ENCODE measurements at regions of chr17 and their contacts with region 1.

Region 1: GRCh38 chr17:4881761-4882555 is 17.4 kb upstream of the C17orf107 start:
- DNase-seq: peak; percentile 74
- H3K4me3 ChIP-seq: no peak overlapping the region
- H3K27ac ChIP-seq: no peak overlapping the region
- H3K4me1 ChIP-seq: no peaks in the 10 kb centered on the region
- H3K27me3 ChIP-seq: no peaks in the 10 kb centered on the region
- CTCF ChIP-seq: peak; percentile 92

Region 2: GRCh38 chr17:4709794-4710692 is 171.9 kb before region 1 on chr17 and contains the start of gene ARRB2:
- intact Hi-C with region 1: loop called (anchors 10 kb)
- DNase-seq: peak; percentile 96
- H3K4me3 ChIP-seq: peak within 1 kb of the TSS; percentile 66
- H3K27ac ChIP-seq: peak within 1 kb of the TSS; percentile 82
- H3K4me1 ChIP-seq: peaks cover 15% of the 10 kb centered on the region
- H3K27me3 ChIP-seq: no peaks in the 10 kb centered on the region
- CTCF ChIP-seq: peak; percentile 31
- total RNA-seq, gene ARRB2: 41.0 to 42.8 TPM

Region 3: GRCh38 chr17:4764595-4764994 is 117.4 kb before region 1 on chr17:
- intact Hi-C with region 1: no loop called
- DNase-seq: no peak
- H3K4me3 ChIP-seq: no peak overlapping the region
- H3K27ac ChIP-seq: no peak overlapping the region
- H3K4me1 ChIP-seq: no peaks in the 10 kb centered on the region
- H3K27me3 ChIP-seq: no peaks in the 10 kb centered on the region
- CTCF ChIP-seq: no peak

Region 4: GRCh38 chr17:4833178-4833940 is 48.6 kb before region 1 on chr17 and contains the start of gene MINK1:
- intact Hi-C with region 1: no loop called
- DNase-seq: peak; percentile 89
- H3K4me3 ChIP-seq: peak within 1 kb of the TSS; percentile 94
- H3K27ac ChIP-seq: peak within 1 kb of the TSS; percentile 98
- H3K4me1 ChIP-seq: peaks cover 14% of the 10 kb centered on the region
- H3K27me3 ChIP-seq: no peaks in the 10 kb centered on the region
- CTCF ChIP-seq: no peak
- total RNA-seq, gene MINK1: 172 to 215 TPM